Gastrocnemius medialis (tissue), 4 donors: ENCODE measurements at regions of chr13 and their contacts with region 1.

Region 1: GRCh38 chr13:40236566-40237168 is 429.8 kb downstream of the FOXO1 start:
- DNase-seq: peak; percentile 93 to 95
- ATAC-seq: peak; percentile 64 to 75
- H3K4me3 ChIP-seq: peak overlapping the region in 2 of 4 donors; percentile 21 to 26
- H3K27ac ChIP-seq: peak overlapping the region; percentile 97 to 99 (median 98)
- H3K4me1 ChIP-seq: peaks cover 50 to 56% of the 10 kb centered on the region in 2 donors
- H3K27me3 ChIP-seq: no peaks in the 10 kb centered on the region
- CTCF ChIP-seq: peak in 1 of 5 experiments; percentile 12
- POLR2A ChIP-seq: peak; percentile 73 to 86

Region 2: DNA sequence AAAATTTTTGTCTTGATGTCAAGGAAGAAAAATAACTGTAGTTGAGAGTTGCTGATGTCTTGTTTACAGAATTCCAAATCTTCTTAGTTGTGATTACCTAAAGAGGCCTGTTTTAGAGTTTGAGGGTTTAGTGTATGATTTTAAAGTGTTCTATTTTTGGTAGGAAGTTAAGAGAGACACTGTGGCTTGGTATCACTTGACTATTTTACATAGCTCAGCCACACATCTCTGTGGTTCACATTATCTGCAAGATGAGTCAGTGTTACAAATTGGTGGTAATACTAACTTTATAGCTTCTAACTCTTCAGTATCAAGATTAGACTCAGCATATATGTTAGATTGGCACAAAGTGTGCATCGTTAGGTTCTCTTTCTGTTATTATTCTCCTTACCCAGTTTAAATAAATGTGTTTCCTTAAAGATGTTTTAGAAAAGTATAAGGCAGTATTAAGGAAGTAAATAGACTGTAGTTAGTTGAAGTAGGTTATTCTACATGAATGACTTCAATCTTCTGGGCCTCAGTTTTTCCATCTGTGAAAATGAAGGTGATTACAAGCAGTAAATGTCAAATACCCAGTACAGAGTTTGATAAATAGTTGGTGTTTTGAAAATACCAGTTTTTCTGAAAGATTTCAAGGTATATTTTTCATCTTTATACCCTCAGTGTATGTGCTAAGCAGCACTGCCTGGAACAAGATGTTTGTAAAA is 547.8 kb before region 1 on chr13:
- in situ Hi-C with region 1: no loop called
- intact Hi-C with region 1: no loop called
- DNase-seq: no peak
- ATAC-seq: no peak
- H3K4me3 ChIP-seq: no peak overlapping the region
- H3K27ac ChIP-seq: no peak overlapping the region
- H3K4me1 ChIP-seq: no peaks in the 10 kb centered on the region
- H3K27me3 ChIP-seq: no peaks in the 10 kb centered on the region
- CTCF ChIP-seq: no peak
- POLR2A ChIP-seq: no peak

Region 3: DNA sequence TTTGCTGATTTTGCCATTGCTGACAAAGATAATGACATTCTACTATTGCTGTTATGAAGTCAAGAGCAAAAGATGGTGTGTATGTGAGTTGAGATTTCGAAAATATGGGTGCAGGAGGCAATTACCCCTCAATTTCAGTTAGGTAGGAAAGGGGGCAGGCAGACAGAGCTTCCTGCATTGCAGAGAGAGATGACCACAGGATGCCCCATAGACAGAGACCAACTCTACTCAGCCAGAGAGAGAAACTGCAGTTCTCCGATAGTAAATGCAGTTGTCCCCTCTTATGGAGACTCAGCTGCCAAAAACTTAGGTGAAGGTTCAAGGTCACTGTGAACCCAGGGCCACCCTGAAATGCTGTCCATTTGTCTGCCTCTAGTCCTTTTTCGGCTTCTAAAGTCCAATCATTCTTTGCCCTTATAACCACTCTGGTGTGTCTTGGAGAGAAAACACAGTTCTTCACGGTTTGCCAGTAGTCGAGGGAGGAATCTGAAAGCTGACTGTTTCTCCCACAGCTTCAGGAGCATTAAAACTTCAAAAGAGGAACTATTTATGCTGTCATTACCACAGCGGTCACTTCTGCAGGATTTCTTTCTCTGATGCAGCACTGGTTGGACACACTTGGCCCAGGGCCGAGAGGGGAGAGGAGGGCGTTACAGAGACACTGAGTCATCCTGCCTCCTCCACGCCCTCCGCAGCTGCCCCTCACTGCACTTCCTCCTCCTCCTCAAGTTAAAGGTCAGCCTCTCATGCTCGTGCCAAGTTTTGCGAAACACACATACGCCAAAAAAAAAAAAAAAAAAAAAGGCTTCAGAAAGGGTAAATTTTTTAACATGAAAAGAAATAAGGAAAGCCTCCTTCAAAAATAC is 165.5 kb after region 1 on chr13:
- in situ Hi-C with region 1: no loop called
- intact Hi-C with region 1: loop called (anchors 5 kb)
- DNase-seq: peak; percentile 85 to 95
- ATAC-seq: peak; percentile 78 to 86
- H3K4me3 ChIP-seq: peak overlapping the region in 2 of 4 donors; percentile 10 to 25
- H3K27ac ChIP-seq: peak overlapping the region; percentile 48 to 75 (median 56)
- H3K4me1 ChIP-seq: peaks cover 32 to 42% of the 10 kb centered on the region in 2 donors
- H3K27me3 ChIP-seq: no peaks in the 10 kb centered on the region
- CTCF ChIP-seq: no peak
- POLR2A ChIP-seq: no peak

Region 4: GRCh38 chr13:40540328-40541044 is 303.8 kb after region 1 on chr13:
- in situ Hi-C with region 1: no loop called
- intact Hi-C with region 1: loop called (anchors 2 kb)
- DNase-seq: no peak
- ATAC-seq: no peak
- H3K4me3 ChIP-seq: no peak overlapping the region
- H3K27ac ChIP-seq: peak overlapping the region; percentile 30 to 60 (median 57)
- H3K4me1 ChIP-seq: peaks cover 15 to 24% of the 10 kb centered on the region in 2 donors
- H3K27me3 ChIP-seq: no peaks in the 10 kb centered on the region
- CTCF ChIP-seq: no peak
- POLR2A ChIP-seq: no peak

Region 5: DNA sequence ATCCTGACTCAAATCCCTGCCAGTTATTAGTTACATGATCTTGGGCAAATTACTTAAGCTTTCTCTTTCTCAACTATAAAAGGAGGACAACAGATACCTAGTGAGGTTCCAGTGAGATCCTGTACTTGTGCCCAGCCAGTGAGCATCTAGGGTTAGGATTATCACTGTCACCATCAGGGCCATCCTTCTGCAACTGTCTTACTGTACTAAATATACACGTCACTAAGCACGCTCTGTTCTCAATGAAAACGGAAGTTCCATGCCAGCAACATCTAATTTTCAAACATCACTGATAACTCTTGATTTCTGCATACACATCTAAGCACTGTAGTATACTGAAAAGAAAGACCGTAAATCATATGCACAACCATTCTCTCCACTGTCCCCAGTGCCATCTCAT is 359.8 kb after region 1 on chr13:
- in situ Hi-C with region 1: no loop called
- intact Hi-C with region 1: loop called (anchors 5 kb)
- DNase-seq: peak; percentile 48 to 66
- ATAC-seq: peak; percentile 63 to 78
- H3K4me3 ChIP-seq: peak overlapping the region in 3 of 4 donors; percentile 13 to 19 (median 18)
- H3K27ac ChIP-seq: peak overlapping the region; percentile 83 to 89 (median 86)
- H3K4me1 ChIP-seq: peaks cover 97 to 100% of the 10 kb centered on the region in 2 donors
- H3K27me3 ChIP-seq: no peaks in the 10 kb centered on the region
- CTCF ChIP-seq: no peak
- POLR2A ChIP-seq: no peak